Endothelial cell of umbilical vein (primary cell): ENCODE measurements at regions of chr2 and their contacts with region 1.

Region 1: DNA sequence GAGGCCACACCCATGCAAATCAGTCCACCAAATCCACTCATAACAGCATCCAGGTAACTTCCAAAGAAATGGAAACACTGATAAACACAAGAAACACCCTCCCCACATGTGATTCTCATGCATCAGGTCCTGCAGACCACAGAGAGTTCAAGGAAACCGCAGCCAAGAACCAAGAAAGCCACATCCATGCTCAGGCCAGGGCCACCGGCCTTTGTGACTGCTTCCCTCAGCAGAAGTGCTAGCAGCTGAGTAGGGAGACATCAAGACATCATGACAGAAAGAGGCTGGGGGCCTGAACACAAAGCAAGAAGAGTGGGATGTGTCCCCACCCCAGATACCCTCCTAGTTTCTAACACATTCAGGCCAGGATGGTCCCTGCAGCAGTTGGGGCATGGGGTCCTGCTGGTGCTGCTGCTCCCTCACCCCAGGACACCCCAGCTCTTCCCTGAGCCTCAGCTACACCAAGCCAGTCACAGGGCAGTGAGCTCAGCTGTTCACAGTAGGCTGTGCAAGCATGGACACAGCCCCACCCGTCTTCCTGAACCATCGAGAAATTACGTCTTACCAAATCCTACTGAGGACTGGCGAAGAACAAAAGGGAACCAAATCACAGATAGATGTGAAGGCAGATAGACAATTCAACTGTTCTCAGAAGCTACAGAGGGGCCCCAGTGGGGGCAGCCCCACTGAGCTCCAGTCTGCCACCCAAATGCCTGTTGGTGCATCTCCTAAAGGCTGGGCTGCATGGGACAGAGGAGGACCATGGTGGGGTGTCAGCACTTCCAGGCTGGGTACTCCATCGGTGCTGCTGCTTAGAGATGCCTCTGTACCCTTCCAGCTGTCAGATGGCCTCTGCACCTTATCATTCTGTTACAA is 60.9 kb downstream of the HDAC4 start:
- DNase-seq: no peak
- H3K4me3 ChIP-seq: no peak overlapping the region
- H3K27ac ChIP-seq: no peak overlapping the region
- H3K4me1 ChIP-seq: no peaks in the 10 kb centered on the region
- H3K27me3 ChIP-seq: no peaks in the 10 kb centered on the region
- CTCF ChIP-seq: no peak
- POLR2A ChIP-seq: no peak

Region 2: GRCh38 chr2:239137165-239137897 is 202.6 kb before region 1 on chr2:
- CTCF ChIA-PET with region 1: no interaction called
- POLR2A ChIA-PET with region 1: no interaction called
- dilution Hi-C with region 1: no loop called
- intact Hi-C with region 1: no loop called
- DNase-seq: no peak
- H3K4me3 ChIP-seq: no peak overlapping the region
- H3K27ac ChIP-seq: no peak overlapping the region
- H3K4me1 ChIP-seq: no peaks in the 10 kb centered on the region
- H3K27me3 ChIP-seq: no peaks in the 10 kb centered on the region
- CTCF ChIP-seq: no peak
- POLR2A ChIP-seq: no peak

Region 3: GRCh38 chr2:239361311-239361642 is 21.3 kb after region 1 on chr2:
- CTCF ChIA-PET with region 1: no interaction called
- POLR2A ChIA-PET with region 1: no interaction called
- dilution Hi-C with region 1: no loop called
- intact Hi-C with region 1: no loop called
- DNase-seq: no peak
- H3K4me3 ChIP-seq: no peak overlapping the region
- H3K27ac ChIP-seq: no peak overlapping the region
- H3K4me1 ChIP-seq: no peaks in the 10 kb centered on the region
- H3K27me3 ChIP-seq: no peaks in the 10 kb centered on the region
- CTCF ChIP-seq: no peak
- POLR2A ChIP-seq: no peak

Region 4: GRCh38 chr2:240348522-240348921 is 1008.6 kb after region 1 on chr2:
- CTCF ChIA-PET with region 1: no interaction called
- POLR2A ChIA-PET with region 1: no interaction called
- dilution Hi-C with region 1: no loop called
- intact Hi-C with region 1: loop called (anchors 5 kb)
- DNase-seq: no peak
- H3K4me3 ChIP-seq: no peak overlapping the region
- H3K27ac ChIP-seq: no peak overlapping the region
- H3K4me1 ChIP-seq: no peaks in the 10 kb centered on the region
- H3K27me3 ChIP-seq: no peaks in the 10 kb centered on the region
- CTCF ChIP-seq: no peak
- POLR2A ChIP-seq: no peak